CD8-positive, alpha-beta T cell (primary cell): ENCODE measurements at regions of chrX and their contacts with region 1.

Region 1: GRCh38 chrX:16695079-16695676 is 17.3 kb downstream of the CTPS2 start:
- DNase-seq: peak; percentile 18 to 77 (median 61)
- ATAC-seq: peak; percentile 80
- H3K4me3 ChIP-seq: no peak overlapping the region
- H3K4me3 Mint-ChIP-seq: no peak overlapping the region
- H3K27ac ChIP-seq: no peak overlapping the region
- H3K27ac Mint-ChIP-seq: no peak overlapping the region
- H3K4me1 ChIP-seq: no peaks in the 10 kb centered on the region
- H3K4me1 Mint-ChIP-seq: no peaks in the 10 kb centered on the region
- H3K27me3 ChIP-seq: no peaks in the 10 kb centered on the region
- H3K27me3 Mint-ChIP-seq: no peaks in the 10 kb centered on the region
- CTCF ChIP-seq: peak; percentile 67

Region 2: GRCh38 chrX:15349046-15349445 is 1346.1 kb before region 1 on chrX:
- CTCF ChIA-PET with region 1: no interaction called
- POLR2A ChIA-PET with region 1: no interaction called
- intact Hi-C with region 1: loop called in 1 of 2 experiments (anchors 10 kb)
- DNase-seq: peak in 4 of 9 experiments; percentile 4 to 53 (median 26)
- ATAC-seq: peak; percentile 31
- H3K4me3 ChIP-seq: no peak overlapping the region
- H3K4me3 Mint-ChIP-seq: no peak overlapping the region
- H3K27ac ChIP-seq: no peak overlapping the region
- H3K27ac Mint-ChIP-seq: no peak overlapping the region
- H3K4me1 ChIP-seq: no peaks in the 10 kb centered on the region
- H3K4me1 Mint-ChIP-seq: no peaks in the 10 kb centered on the region
- H3K27me3 ChIP-seq: no peaks in the 10 kb centered on the region
- H3K27me3 Mint-ChIP-seq: peaks cover 2% of the 10 kb centered on the region
- CTCF ChIP-seq: no peak

Region 3: GRCh38 chrX:15493118-15493962 is 1201.8 kb before region 1 on chrX and contains the start of gene PIR:
- CTCF ChIA-PET with region 1: no interaction called
- POLR2A ChIA-PET with region 1: no interaction called
- intact Hi-C with region 1: loop called (anchors 5 to 10 kb)
- DNase-seq: peak in 8 of 9 experiments; percentile 13 to 61 (median 34)
- ATAC-seq: peak; percentile 62
- H3K4me3 ChIP-seq: peak within 1 kb of the TSS; percentile 27 to 45
- H3K4me3 Mint-ChIP-seq: peak within 1 kb of the TSS; percentile 83
- H3K27ac ChIP-seq: no peak within 1 kb of the TSS
- H3K27ac Mint-ChIP-seq: no peak within 1 kb of the TSS
- H3K4me1 ChIP-seq: no peaks in the 10 kb centered on the region
- H3K4me1 Mint-ChIP-seq: peaks cover 7% of the 10 kb centered on the region
- H3K27me3 ChIP-seq: no peaks in the 10 kb centered on the region
- H3K27me3 Mint-ChIP-seq: peaks cover 4% of the 10 kb centered on the region
- CTCF ChIP-seq: no peak
- total RNA-seq, gene PIR: not detected

Region 4: GRCh38 chrX:15686818-15687685 is 1008.1 kb before region 1 on chrX:
- CTCF ChIA-PET with region 1: no interaction called
- POLR2A ChIA-PET with region 1: no interaction called
- intact Hi-C with region 1: loop called in 1 of 2 experiments (anchors 10 kb)
- DNase-seq: peak; percentile 16 to 79 (median 60)
- ATAC-seq: peak; percentile 87
- H3K4me3 ChIP-seq: no peak overlapping the region
- H3K4me3 Mint-ChIP-seq: no peak overlapping the region
- H3K27ac ChIP-seq: no peak overlapping the region
- H3K27ac Mint-ChIP-seq: no peak overlapping the region
- H3K4me1 ChIP-seq: peaks cover 5% of the 10 kb centered on the region
- H3K4me1 Mint-ChIP-seq: peaks cover 7% of the 10 kb centered on the region
- H3K27me3 ChIP-seq: no peaks in the 10 kb centered on the region
- H3K27me3 Mint-ChIP-seq: no peaks in the 10 kb centered on the region
- CTCF ChIP-seq: peak; percentile 45

Region 5: GRCh38 chrX:16633754-16634153 is 61.4 kb before region 1 on chrX:
- CTCF ChIA-PET with region 1: no interaction called
- POLR2A ChIA-PET with region 1: no interaction called
- intact Hi-C with region 1: no loop called
- DNase-seq: no peak
- ATAC-seq: no peak
- H3K4me3 ChIP-seq: no peak overlapping the region
- H3K4me3 Mint-ChIP-seq: no peak overlapping the region
- H3K27ac ChIP-seq: no peak overlapping the region
- H3K27ac Mint-ChIP-seq: no peak overlapping the region
- H3K4me1 ChIP-seq: no peaks in the 10 kb centered on the region
- H3K4me1 Mint-ChIP-seq: no peaks in the 10 kb centered on the region
- H3K27me3 ChIP-seq: no peaks in the 10 kb centered on the region
- H3K27me3 Mint-ChIP-seq: no peaks in the 10 kb centered on the region
- CTCF ChIP-seq: no peak

Region 6: GRCh38 chrX:16855363-16856075 is 160.3 kb after region 1 on chrX:
- CTCF ChIA-PET with region 1: no interaction called
- POLR2A ChIA-PET with region 1: no interaction called
- intact Hi-C with region 1: no loop called
- DNase-seq: no peak
- ATAC-seq: peak; percentile 23
- H3K4me3 ChIP-seq: no peak overlapping the region
- H3K4me3 Mint-ChIP-seq: no peak overlapping the region
- H3K27ac ChIP-seq: no peak overlapping the region
- H3K27ac Mint-ChIP-seq: no peak overlapping the region
- H3K4me1 ChIP-seq: no peaks in the 10 kb centered on the region
- H3K4me1 Mint-ChIP-seq: peaks cover 19% of the 10 kb centered on the region
- H3K27me3 ChIP-seq: no peaks in the 10 kb centered on the region
- H3K27me3 Mint-ChIP-seq: no peaks in the 10 kb centered on the region
- CTCF ChIP-seq: no peak